ENCODE measurements at regions of chr18 and their contacts with region 1.

Region 1: GRCh38 chr18:24138789-24139616 is at the start of gene CABYR:
- DNase-seq: no peak
- ATAC-seq: peak; percentile 97
- H3K4me3 ChIP-seq: peak within 1 kb of the TSS; percentile 75 to 77
- H3K27ac ChIP-seq: peak within 1 kb of the TSS; percentile 92
- H3K4me1 ChIP-seq: no peaks in the 10 kb centered on the region; the same call in 1 of the 2 replicates
- H3K27me3 ChIP-seq: no peaks in the 10 kb centered on the region
- CTCF ChIP-seq: no peak
- total RNA-seq, gene CABYR: 29.4 TPM

Region 2: DNA sequence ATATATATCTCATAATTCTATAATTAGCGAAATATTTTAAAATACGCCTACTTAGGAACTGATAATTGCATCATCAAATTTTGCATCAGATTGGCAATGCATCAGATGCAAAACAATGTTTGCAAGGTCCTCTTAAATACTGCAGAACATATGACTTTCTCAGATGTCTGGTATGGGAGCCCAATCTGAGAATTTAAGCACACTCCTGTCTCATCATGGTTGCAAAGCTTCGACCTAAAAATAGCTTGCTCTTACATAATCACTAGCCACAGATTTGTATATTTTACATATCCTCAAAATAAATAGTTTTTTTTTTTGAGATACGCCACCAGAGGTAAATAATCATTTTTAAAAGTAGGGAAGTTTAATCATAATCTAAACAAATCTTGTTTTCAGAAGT is 123.1 kb after region 1 on chr18:
- CTCF ChIA-PET with region 1: interaction called, 18 read pairs
- POLR2A ChIA-PET with region 1: no interaction called
- in situ Hi-C with region 1: no loop called
- intact Hi-C with region 1: no loop called
- DNase-seq: no peak
- ATAC-seq: no peak
- H3K4me3 ChIP-seq: no peak overlapping the region
- H3K27ac ChIP-seq: no peak overlapping the region
- H3K4me1 ChIP-seq: peaks cover 3% of the 10 kb centered on the region; the same call in 1 of the 2 replicates
- H3K27me3 ChIP-seq: no peaks in the 10 kb centered on the region
- CTCF ChIP-seq: no peak

Measured in Panc1 (cell line).